ENCODE measurements at regions of chr4 and their contacts with region 1.

Region 1: GRCh38 chr4:99894161-99894997 is at the start of gene LAMTOR3:
- DNase-seq: peak; percentile 95 to 96
- ATAC-seq: peak; percentile 98
- H3K4me3 ChIP-seq: peak within 1 kb of the TSS; percentile 84 to 91
- H3K27ac ChIP-seq: peak within 1 kb of the TSS in 1 of 2 donors; percentile 70
- H3K4me1 ChIP-seq: peaks cover 0 to 4% of the 10 kb centered on the region in 2 donors
- H3K27me3 ChIP-seq: no peaks in the 10 kb centered on the region
- total RNA-seq, gene LAMTOR3: 31.1 to 31.5 TPM

Region 2: DNA sequence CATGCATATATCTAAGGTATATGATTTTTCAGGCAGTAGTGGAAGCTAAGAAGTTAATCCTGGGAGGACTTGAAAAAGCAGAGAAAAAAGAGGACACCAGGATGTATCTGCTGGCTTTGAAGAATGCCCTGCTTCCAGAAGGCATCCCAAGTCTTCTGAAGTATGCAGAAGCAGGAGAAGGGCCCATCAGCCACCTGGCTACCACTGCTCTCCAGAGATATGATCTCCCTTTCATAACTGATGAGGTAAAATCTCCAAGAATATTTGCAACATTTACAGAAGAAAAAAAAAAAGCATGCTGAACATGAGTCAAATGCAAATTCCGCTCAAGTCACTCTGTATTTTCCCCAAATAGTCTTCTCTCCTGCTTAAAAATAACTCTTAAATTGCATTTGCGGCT is 287.7 kb before region 1 on chr4:
- intact Hi-C with region 1: no loop called
- DNase-seq: no peak
- ATAC-seq: no peak
- H3K4me3 ChIP-seq: no peak overlapping the region
- H3K27ac ChIP-seq: no peak overlapping the region
- H3K4me1 ChIP-seq: peaks cover 0 to 5% of the 10 kb centered on the region in 2 donors
- H3K27me3 ChIP-seq: no peaks in the 10 kb centered on the region

Region 3: GRCh38 chr4:99949034-99949998 is 54.9 kb after region 1 on chr4:
- intact Hi-C with region 1: loop called (anchors 5 kb)
- DNase-seq: peak; percentile 93
- ATAC-seq: peak; percentile 69
- H3K4me3 ChIP-seq: peak overlapping the region; percentile 72 to 90
- H3K27ac ChIP-seq: peak overlapping the region in 1 of 2 donors; percentile 81
- H3K4me1 ChIP-seq: no peaks in the 10 kb centered on the region
- H3K27me3 ChIP-seq: no peaks in the 10 kb centered on the region

Measured in aorta (tissue), 5 donors.